Kidney (tissue), 22 donors: ENCODE measurements at regions of chr17 and their contacts with region 1.

Region 1: GRCh38 chr17:49399995-49400394 is 14.7 kb downstream of the PHB1 start:
- DNase-seq: no peak
- H3K4me3 ChIP-seq: no peak overlapping the region
- H3K27ac ChIP-seq: no peak overlapping the region
- H3K4me1 ChIP-seq: no peaks in the 10 kb centered on the region
- H3K27me3 ChIP-seq: no peaks in the 10 kb centered on the region
- CTCF ChIP-seq: no peak

Region 2: GRCh38 chr17:49312722-49313121 is 87.3 kb before region 1 on chr17:
- intact Hi-C with region 1: loop called (anchors 5 kb)
- DNase-seq: no peak
- H3K4me3 ChIP-seq: no peak overlapping the region
- H3K27ac ChIP-seq: no peak overlapping the region
- H3K4me1 ChIP-seq: peaks cover 0 to 2% (median 0%) of the 10 kb centered on the region in 3 donors
- H3K27me3 ChIP-seq: no peaks in the 10 kb centered on the region
- CTCF ChIP-seq: no peak

Region 3: GRCh38 chr17:49515196-49515770 is 115.3 kb after region 1 on chr17:
- intact Hi-C with region 1: no loop called
- DNase-seq: peak; percentile 87 to 97 (median 93)
- H3K4me3 ChIP-seq: no peak overlapping the region
- H3K27ac ChIP-seq: peak overlapping the region; percentile 60 to 76
- H3K4me1 ChIP-seq: peaks cover 0 to 16% (median 15%) of the 10 kb centered on the region in 3 donors
- H3K27me3 ChIP-seq: no peaks in the 10 kb centered on the region
- CTCF ChIP-seq: no peak